HEK293 (cell line): ENCODE measurements at regions of chr11 and their contacts with region 1.

Region 1: DNA sequence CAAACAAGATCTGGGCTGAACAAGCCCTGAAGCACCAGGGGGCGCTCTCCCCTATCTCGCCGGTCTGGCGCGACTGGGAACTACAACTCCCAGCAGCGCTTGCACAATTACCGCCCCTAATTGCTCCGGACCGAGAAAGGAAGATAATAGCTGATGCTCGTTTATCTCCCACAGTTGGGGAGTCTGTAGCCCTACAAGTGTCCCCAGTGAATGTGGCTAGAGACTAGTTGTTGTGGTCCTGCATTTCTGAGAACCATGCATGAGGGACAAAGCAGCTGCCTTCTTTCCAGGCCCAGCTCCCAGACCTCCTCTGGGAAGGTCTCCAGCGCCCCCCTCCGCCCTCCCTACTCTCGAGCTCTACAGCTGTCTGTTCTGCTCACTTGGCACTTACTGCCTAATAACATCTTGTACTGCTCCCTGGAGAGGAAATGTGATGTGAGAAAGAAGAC is 34.4 kb downstream of the NRXN2 start:
- H3K4me3 ChIP-seq: peak overlapping the region; percentile 52
- H3K27ac ChIP-seq: no peak overlapping the region
- H3K4me1 ChIP-seq: no peaks in the 10 kb centered on the region
- CTCF ChIP-seq: peak; percentile 92

Region 2: DNA sequence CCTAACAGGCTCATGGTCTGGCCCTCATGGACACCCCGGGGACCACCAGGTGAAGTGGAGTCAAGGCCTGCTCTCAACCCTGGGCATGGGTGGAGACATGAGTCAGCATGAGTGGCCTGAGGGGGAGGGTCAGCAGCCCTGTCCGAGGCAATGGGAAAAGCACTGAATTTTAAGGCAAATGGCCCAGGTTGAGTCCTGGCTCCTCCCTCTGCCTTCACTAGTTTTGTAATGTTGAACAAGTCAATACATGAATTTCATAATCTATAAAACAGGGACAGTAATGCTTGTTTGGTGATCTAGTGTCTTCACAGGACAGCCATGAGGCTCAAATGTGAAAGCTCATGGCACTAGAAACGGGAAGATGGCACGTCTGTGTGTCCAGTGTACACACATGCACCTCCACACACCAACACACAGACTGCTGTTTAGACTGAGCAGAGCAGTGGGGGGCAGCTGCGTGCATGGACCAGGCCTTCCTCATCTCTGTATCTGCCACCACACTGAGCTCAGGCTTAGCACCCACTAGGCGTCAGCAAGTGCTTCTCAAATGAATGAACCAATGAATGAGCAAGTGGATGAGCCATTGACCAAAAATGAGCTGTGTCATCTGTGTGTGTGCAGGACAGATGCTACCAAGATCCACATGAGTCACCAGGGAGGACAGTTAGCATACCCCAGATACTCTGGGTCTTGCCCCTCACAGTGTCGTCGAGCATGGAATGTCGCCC is 29.0 kb before region 1 on chr11:
- CTCF ChIA-PET with region 1: interaction called, 11 read pairs
- POLR2A ChIA-PET with region 1: interaction called, 3 read pairs
- H3K4me3 ChIP-seq: no peak overlapping the region
- H3K27ac ChIP-seq: no peak overlapping the region
- H3K4me1 ChIP-seq: no peaks in the 10 kb centered on the region
- CTCF ChIP-seq: no peak

Region 3: GRCh38 chr11:64703048-64703447 is 14.5 kb after region 1 on chr11:
- CTCF ChIA-PET with region 1: interaction called, 53 read pairs
- POLR2A ChIA-PET with region 1: interaction called, 3 read pairs
- H3K4me3 ChIP-seq: no peak overlapping the region
- H3K27ac ChIP-seq: no peak overlapping the region
- H3K4me1 ChIP-seq: no peaks in the 10 kb centered on the region
- CTCF ChIP-seq: no peak

Region 4: GRCh38 chr11:64716473-64717267 is 28.1 kb after region 1 on chr11:
- CTCF ChIA-PET with region 1: interaction called, 16 read pairs
- POLR2A ChIA-PET with region 1: no interaction called
- H3K4me3 ChIP-seq: no peak overlapping the region
- H3K27ac ChIP-seq: no peak overlapping the region
- H3K4me1 ChIP-seq: no peaks in the 10 kb centered on the region
- CTCF ChIP-seq: no peak

Region 5: GRCh38 chr11:64734811-64735724 is 46.5 kb after region 1 on chr11:
- CTCF ChIA-PET with region 1: interaction called, 31 read pairs
- POLR2A ChIA-PET with region 1: no interaction called
- H3K4me3 ChIP-seq: no peak overlapping the region
- H3K27ac ChIP-seq: no peak overlapping the region
- H3K4me1 ChIP-seq: no peaks in the 10 kb centered on the region
- CTCF ChIP-seq: no peak

Region 6: DNA sequence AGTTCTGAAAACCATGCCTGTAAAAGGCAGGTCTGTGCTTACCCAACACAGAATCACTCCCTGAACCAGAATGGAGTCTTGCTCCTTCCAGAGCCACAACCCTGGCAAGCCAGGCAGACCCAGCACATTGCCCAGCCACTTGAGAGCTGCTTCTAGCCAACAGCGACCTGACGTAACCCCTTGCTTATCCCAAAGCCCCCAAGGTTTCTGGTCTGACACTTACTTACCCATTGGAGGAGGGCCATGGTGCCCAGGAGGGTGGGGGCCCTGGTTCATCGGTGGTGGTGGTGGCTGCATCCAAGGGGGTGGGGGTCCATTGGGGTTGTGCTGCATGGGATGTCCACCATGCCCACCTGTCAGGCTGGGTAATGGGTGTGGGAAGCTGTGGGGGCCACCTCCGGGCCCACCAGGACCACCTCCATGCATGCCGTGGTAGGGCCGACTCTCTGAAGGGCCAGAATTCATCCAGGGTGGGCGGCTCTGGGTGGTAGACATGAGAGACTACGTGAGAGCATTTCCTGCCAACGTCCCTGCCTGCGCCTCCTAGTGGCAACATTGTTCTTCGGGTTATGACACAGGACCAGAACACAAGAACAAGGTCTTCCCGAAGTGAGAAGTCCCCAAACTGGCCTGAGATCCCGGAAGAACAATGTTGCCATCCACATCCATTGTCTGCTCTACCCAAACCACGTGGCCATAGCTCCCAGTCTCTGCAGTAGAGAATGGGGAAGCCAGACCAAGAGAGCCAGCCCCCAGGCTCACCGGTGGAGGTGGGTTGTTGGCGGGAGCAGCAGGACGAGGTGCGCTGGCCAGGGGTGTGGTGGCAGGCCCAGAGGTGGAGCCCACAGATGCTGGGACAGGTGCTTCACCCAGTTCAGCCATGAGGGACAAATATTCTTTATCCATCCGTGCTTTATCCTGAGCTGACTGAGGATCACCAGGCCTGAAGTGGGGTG is 79.1 kb after region 1 on chr11:
- CTCF ChIA-PET with region 1: interaction called, 12 read pairs
- POLR2A ChIA-PET with region 1: interaction called, 4 read pairs
- H3K4me3 ChIP-seq: no peak overlapping the region
- H3K27ac ChIP-seq: no peak overlapping the region
- H3K4me1 ChIP-seq: peaks cover 7% of the 10 kb centered on the region
- CTCF ChIP-seq: peak; percentile 56